A673 (cell line): ENCODE measurements at regions of chr6 and their contacts with region 1.

Region 1: GRCh38 chr6:134328138-134328537 is 10.2 kb upstream of the SGK1 start:
- DNase-seq: no peak
- H3K4me3 ChIP-seq: no peak overlapping the region
- H3K27ac ChIP-seq: no peak overlapping the region
- H3K4me1 ChIP-seq: no peaks in the 10 kb centered on the region
- H3K27me3 ChIP-seq: no peaks in the 10 kb centered on the region
- CTCF ChIP-seq: no peak

Region 2: GRCh38 chr6:134201711-134202110 is 126.4 kb before region 1 on chr6:
- CTCF ChIA-PET with region 1: no interaction called
- POLR2A ChIA-PET with region 1: interaction called, 10 read pairs
- intact Hi-C with region 1: no loop called
- DNase-seq: no peak
- H3K4me3 ChIP-seq: no peak overlapping the region
- H3K27ac ChIP-seq: no peak overlapping the region
- H3K4me1 ChIP-seq: no peaks in the 10 kb centered on the region
- H3K27me3 ChIP-seq: no peaks in the 10 kb centered on the region
- CTCF ChIP-seq: no peak

Region 3: DNA sequence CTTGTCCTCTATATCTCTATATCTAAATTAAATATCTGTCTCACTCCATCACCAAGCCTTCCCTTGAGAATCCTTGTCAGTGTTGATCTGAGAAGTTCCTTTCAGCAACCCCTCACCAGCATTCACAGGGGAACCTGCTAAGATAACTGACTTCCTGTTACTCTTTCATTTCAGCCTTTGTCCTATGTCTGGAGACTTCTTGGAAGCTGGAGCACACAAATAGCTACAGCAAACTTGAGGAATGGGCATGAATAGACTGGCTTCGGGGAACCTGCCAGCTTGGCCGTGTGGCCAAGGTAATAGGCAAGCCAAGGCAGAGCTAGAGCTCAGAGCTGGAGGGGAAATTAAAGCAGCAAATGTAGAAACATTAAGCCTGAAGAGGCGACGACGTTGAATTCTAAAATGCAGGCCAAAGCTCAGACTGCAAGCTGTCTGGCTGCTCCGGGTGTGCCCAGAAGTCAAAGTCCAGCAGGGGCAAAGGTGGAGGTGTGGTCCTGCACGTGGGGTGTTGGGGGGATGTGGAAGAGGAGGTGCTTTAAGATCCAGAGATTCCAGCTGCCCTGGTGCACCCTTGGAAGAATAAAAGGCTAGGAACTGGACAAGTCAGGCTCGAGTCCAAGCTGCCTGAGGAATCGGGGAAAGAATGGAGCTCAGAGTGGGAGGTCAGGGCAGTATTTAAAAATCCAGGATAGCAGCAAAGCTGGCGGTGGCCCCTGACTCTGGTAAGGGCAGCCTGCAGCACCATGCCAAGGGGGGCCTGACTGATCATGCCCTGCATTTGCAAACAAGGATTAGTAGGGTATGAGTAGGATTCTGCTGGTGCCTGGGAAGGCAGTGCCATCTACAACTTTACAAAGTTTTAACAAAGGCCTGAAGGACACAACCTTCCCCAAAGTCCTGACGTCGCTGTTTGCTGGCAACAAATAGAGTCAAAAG is 174.7 kb after region 1 on chr6:
- CTCF ChIA-PET with region 1: no interaction called
- POLR2A ChIA-PET with region 1: no interaction called
- intact Hi-C with region 1: no loop called
- DNase-seq: no peak
- H3K4me3 ChIP-seq: no peak overlapping the region
- H3K27ac ChIP-seq: no peak overlapping the region
- H3K4me1 ChIP-seq: peaks cover 15% of the 10 kb centered on the region
- H3K27me3 ChIP-seq: no peaks in the 10 kb centered on the region
- CTCF ChIP-seq: no peak

Region 4: GRCh38 chr6:134636186-134636799 is 308.2 kb after region 1 on chr6:
- CTCF ChIA-PET with region 1: no interaction called
- POLR2A ChIA-PET with region 1: no interaction called
- intact Hi-C with region 1: no loop called
- DNase-seq: peak; percentile 34
- H3K4me3 ChIP-seq: no peak overlapping the region
- H3K27ac ChIP-seq: no peak overlapping the region
- H3K4me1 ChIP-seq: peaks cover 10% of the 10 kb centered on the region
- H3K27me3 ChIP-seq: no peaks in the 10 kb centered on the region
- CTCF ChIP-seq: no peak